ENCODE measurements at regions of chr5 and their contacts with region 1.

Region 1: GRCh38 chr5:139968547-139969261 is 74.4 kb downstream of the NRG2 start:
- DNase-seq: peak; percentile 87
- ATAC-seq: peak; percentile 92

Region 2: GRCh38 chr5:139014726-139015125 is 954.0 kb before region 1 on chr5:
- intact Hi-C with region 1: no loop called
- DNase-seq: no peak
- ATAC-seq: no peak

Region 3: DNA sequence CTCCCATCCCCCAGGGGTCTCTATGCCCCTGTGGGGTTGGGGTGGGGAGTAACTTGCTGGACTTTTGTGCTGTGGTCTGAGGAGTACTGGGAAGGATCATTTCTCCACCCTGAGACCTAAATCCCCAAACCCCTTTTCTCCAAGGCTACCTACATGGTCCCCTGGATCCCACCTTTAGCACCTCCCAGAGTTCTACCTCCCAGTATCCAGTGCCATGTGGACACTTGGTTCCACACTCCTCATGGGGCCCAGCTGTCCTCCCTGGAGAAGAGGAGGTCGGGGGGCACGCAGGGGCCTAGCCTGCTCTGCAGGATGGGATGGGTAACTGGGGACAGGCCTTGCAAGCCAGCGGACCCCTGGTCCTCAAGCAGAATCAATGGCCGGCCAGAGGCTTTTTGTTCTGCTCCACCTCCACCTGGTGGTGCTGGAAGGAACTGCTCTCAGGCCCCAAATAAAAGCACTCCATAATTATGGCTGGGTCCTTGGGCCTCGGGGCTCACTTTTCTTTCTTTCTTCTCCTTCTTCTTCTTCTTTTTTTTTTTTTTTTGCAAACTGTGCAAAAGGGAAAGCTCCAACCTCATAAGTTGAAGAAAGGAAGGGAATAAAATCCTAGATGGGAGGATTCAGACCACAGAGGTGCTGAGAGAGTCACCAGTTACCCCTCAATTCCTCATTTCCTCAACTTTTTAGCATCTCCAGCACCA is 104.7 kb before region 1 on chr5:
- intact Hi-C with region 1: loop called (anchors 1 kb)
- DNase-seq: no peak
- ATAC-seq: peak; percentile 80

Region 4: GRCh38 chr5:139882961-139883539 is 85.7 kb before region 1 on chr5:
- intact Hi-C with region 1: loop called (anchors 5 kb)
- DNase-seq: no peak
- ATAC-seq: no peak

Measured in Right ventricle myocardium inferior (tissue), 1 donor.